CD8-positive, alpha-beta T cell (primary cell): ENCODE measurements at regions of chr6 and their contacts with region 1.

Region 1: DNA sequence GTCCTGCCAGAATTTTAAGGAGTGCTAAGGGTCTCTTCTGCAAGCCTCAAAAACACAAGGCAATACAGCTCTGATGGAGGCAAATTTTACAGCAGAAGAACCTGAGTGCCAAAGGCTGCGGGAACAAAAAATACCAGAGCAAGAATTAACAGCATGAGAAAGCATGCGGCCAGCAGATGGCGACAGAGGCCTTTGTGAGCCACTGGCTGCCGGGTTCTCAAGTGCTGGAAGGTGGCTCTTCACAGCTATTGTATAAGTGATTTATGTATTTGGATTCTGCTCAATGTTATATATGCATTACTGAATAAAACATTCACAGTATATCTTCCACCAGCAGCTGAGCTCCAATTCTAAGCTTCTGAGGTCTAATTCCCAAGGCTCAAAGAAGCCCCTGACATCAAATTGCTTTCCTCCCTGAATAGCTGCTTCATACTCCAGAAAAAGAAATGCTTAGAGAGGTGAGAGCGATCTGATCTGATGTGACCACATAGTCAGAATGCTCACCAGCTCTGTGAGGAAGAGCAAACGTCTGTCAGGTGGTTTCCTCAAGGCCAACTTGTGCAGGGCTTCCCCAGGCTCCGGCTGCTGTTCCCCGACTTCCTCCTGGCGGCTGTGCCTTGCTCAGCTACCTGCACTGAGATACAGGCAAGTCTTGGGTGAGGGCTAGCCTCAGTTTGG is 58.6 kb downstream of the PPP1R3G start:
- DNase-seq: peak; percentile 72 to 90 (median 84)
- ATAC-seq: peak; percentile 73
- H3K4me3 ChIP-seq: no peak overlapping the region
- H3K4me3 Mint-ChIP-seq: no peak overlapping the region
- H3K27ac ChIP-seq: no peak overlapping the region
- H3K27ac Mint-ChIP-seq: no peak overlapping the region
- H3K4me1 ChIP-seq: no peaks in the 10 kb centered on the region
- H3K4me1 Mint-ChIP-seq: peaks cover 2% of the 10 kb centered on the region
- H3K27me3 ChIP-seq: no peaks in the 10 kb centered on the region
- H3K27me3 Mint-ChIP-seq: no peaks in the 10 kb centered on the region
- CTCF ChIP-seq: peak; percentile 98

Region 2: DNA sequence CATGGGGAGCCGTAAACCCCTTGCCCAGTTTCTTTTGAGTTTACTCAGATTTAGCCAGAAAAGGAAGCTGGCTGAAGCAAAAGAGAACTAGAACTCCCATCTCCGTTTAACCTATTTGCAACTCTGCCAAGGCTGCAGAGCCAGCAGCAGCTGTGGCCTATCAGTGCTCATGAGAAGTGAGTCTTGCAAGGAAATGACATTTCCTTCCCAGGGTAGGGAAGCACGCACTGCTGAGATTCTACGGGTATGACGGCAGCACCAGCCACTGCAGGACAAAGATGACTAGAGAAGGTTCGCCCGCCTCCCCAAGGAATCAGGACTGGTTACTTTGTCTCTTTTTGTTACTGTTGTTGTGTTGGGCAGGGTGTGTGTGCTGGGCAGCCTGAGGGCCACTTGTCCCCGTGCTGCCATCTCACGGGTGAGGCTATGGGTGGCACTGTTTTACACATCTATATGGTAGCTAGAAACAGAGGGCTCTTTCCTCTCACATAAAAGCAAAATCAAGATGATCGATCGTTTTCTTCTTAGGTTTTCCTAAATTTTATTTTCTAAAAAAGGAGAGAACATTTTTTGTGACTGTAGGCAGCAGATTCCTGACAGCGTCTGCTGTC is 10.9 kb before region 1 on chr6:
- CTCF ChIA-PET with region 1: interaction called, 18 read pairs
- POLR2A ChIA-PET with region 1: no interaction called
- intact Hi-C with region 1: no loop called
- DNase-seq: peak in 2 of 9 experiments; percentile 11 to 37
- ATAC-seq: no peak
- H3K4me3 ChIP-seq: no peak overlapping the region
- H3K4me3 Mint-ChIP-seq: no peak overlapping the region
- H3K27ac ChIP-seq: no peak overlapping the region
- H3K27ac Mint-ChIP-seq: no peak overlapping the region
- H3K4me1 ChIP-seq: no peaks in the 10 kb centered on the region
- H3K4me1 Mint-ChIP-seq: no peaks in the 10 kb centered on the region
- H3K27me3 ChIP-seq: no peaks in the 10 kb centered on the region
- H3K27me3 Mint-ChIP-seq: no peaks in the 10 kb centered on the region
- CTCF ChIP-seq: no peak

Region 3: GRCh38 chr6:5174244-5174643 is 30.5 kb after region 1 on chr6:
- CTCF ChIA-PET with region 1: interaction called, 64 read pairs
- POLR2A ChIA-PET with region 1: interaction called, 7 read pairs
- intact Hi-C with region 1: loop called in 1 of 2 experiments (anchors 5 kb)
- DNase-seq: peak; percentile 13 to 85 (median 56)
- ATAC-seq: peak; percentile 87
- H3K4me3 ChIP-seq: peak overlapping the region; percentile 30 to 48
- H3K4me3 Mint-ChIP-seq: peak overlapping the region; percentile 68
- H3K27ac ChIP-seq: peak overlapping the region; percentile 66 to 91
- H3K27ac Mint-ChIP-seq: peak overlapping the region; percentile 89
- H3K4me1 ChIP-seq: peaks cover 45% of the 10 kb centered on the region
- H3K4me1 Mint-ChIP-seq: peaks cover 56% of the 10 kb centered on the region
- H3K27me3 ChIP-seq: no peaks in the 10 kb centered on the region
- H3K27me3 Mint-ChIP-seq: no peaks in the 10 kb centered on the region
- CTCF ChIP-seq: no peak

Region 4: DNA sequence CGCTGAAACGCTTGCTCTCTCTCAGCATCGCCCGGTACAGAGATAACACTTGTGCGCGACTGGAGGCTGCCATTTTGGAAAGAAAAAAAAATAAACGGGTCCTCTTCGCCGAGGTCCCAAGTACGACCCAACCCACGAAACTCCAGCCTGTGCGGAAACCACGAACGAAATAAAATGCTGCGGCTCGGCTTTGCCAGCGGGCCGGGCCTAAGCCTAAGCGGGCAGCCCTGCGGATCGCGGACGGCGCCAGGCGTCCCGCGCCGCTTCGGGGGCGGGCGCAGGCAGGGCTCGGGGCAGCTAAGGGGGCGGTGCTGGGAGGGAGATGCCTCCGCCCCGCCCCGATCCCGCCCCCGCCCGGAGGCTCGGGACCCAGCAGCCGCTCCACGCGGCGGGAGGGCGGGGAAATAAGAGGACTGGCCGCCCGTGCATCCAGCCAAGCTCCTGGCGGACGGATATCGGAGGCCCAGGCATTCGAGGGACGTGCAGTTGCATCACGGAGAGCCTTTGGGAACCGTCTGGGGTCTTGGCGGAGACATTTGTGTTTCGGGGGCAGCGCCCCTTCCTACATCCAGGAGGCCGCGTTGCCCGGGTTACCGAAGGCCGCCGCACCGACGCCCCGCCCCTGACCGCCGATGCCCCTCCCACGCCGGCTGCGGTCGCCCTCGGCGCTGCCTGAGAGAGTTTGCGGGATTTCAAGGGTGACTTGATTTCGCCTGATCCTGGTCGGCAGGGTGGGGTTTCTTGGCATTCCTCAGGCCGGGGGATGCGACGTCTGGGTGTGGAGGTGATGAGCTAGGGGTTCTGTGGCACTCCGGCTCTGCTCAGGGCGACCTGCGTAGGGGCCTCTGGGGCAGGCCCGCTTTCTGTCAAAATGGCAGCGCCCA is 117.1 kb after region 1 on chr6 and contains the starts of genes FARS2 and LYRM4:
- CTCF ChIA-PET with region 1: interaction called, 9 read pairs
- POLR2A ChIA-PET with region 1: interaction called, 6 read pairs
- intact Hi-C with region 1: loop called (anchors 2 to 5 kb)
- DNase-seq: peak; percentile 86 to 98 (median 92)
- ATAC-seq: peak; percentile 82
- H3K4me3 ChIP-seq: peak within 1 kb of the TSS; percentile 93
- H3K4me3 Mint-ChIP-seq: peak within 1 kb of the TSS; percentile 98
- H3K27ac ChIP-seq: peak within 1 kb of the TSS; percentile 97 to 99
- H3K27ac Mint-ChIP-seq: peak within 1 kb of the TSS; percentile 100
- H3K4me1 ChIP-seq: peaks cover 17% of the 10 kb centered on the region
- H3K4me1 Mint-ChIP-seq: peaks cover 37% of the 10 kb centered on the region
- H3K27me3 ChIP-seq: no peaks in the 10 kb centered on the region
- H3K27me3 Mint-ChIP-seq: no peaks in the 10 kb centered on the region
- CTCF ChIP-seq: no peak
- total RNA-seq, gene FARS2: 9.1 to 10.5 TPM
- total RNA-seq, gene LYRM4: 23.4 to 24.3 TPM

Region 5: DNA sequence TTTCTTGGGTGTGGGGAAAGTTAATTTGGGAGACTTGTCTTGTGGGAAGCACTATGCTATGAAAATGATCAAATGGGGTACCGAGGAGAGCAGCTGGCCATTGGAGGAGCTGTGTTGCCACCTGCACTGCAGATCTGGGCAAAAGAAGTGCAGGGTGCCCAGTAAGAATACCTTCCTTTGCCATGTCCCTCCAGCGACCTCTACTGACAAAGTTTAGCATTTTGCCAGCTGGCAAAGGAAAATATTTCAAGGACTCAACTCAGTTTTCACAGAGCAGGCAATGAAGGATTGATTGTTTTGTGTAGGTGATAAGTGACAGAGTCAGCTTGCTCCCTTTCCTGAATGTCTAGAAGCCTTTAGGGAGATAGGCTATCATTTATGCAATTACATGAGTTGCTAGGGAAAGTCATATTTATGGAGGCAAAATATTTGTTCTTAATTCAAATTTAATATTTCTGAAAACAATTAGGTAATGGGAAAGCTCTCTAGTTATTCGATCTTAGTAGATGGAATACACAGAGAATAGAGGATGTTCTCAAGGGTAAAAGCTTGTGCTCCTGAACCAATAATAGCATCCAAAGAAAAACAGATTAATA is 236.0 kb after region 1 on chr6:
- CTCF ChIA-PET with region 1: interaction called, 13 read pairs
- POLR2A ChIA-PET with region 1: no interaction called
- intact Hi-C with region 1: no loop called
- DNase-seq: peak in 1 of 9 experiments; percentile 17
- ATAC-seq: no peak
- H3K4me3 ChIP-seq: no peak overlapping the region
- H3K4me3 Mint-ChIP-seq: no peak overlapping the region
- H3K27ac ChIP-seq: no peak overlapping the region
- H3K27ac Mint-ChIP-seq: no peak overlapping the region
- H3K4me1 ChIP-seq: no peaks in the 10 kb centered on the region
- H3K4me1 Mint-ChIP-seq: peaks cover 6% of the 10 kb centered on the region
- H3K27me3 ChIP-seq: no peaks in the 10 kb centered on the region
- H3K27me3 Mint-ChIP-seq: no peaks in the 10 kb centered on the region
- CTCF ChIP-seq: no peak

Region 6: GRCh38 chr6:6315660-6316059 is 1171.9 kb after region 1 on chr6:
- CTCF ChIA-PET with region 1: no interaction called
- POLR2A ChIA-PET with region 1: no interaction called
- intact Hi-C with region 1: loop called in 1 of 2 experiments (anchors 10 kb)
- DNase-seq: peak in 4 of 9 experiments; percentile 14 to 52 (median 28)
- ATAC-seq: no peak
- H3K4me3 ChIP-seq: no peak overlapping the region
- H3K4me3 Mint-ChIP-seq: no peak overlapping the region
- H3K27ac ChIP-seq: no peak overlapping the region
- H3K27ac Mint-ChIP-seq: no peak overlapping the region
- H3K4me1 ChIP-seq: no peaks in the 10 kb centered on the region
- H3K4me1 Mint-ChIP-seq: peaks cover 5% of the 10 kb centered on the region
- H3K27me3 ChIP-seq: peaks cover 7% of the 10 kb centered on the region in 2 experiments
- H3K27me3 Mint-ChIP-seq: peaks cover 42% of the 10 kb centered on the region
- CTCF ChIP-seq: peak; percentile 80

Region 7: DNA sequence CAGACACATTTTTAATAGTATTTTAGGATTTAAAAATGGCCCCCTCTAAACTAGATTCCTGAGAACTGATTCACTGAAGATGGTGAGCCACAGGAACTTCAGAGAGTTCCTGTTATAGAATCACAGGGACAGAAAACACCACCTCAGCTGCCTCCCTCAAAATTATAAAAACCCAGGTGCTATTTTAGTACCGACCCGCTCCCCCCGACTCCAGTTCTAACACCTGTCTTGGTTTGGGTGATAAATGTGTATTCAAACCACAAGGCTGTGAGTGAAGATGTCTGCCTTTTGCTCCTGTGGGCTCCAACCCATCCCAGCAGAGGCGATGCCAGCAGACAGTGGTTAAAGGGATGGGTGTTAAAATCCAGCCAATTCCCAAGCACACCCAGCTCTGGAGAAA is 1317.4 kb after region 1 on chr6:
- CTCF ChIA-PET with region 1: no interaction called
- POLR2A ChIA-PET with region 1: no interaction called
- intact Hi-C with region 1: no loop called
- DNase-seq: no peak
- ATAC-seq: no peak
- H3K4me3 ChIP-seq: no peak overlapping the region
- H3K4me3 Mint-ChIP-seq: no peak overlapping the region
- H3K27ac ChIP-seq: no peak overlapping the region
- H3K27ac Mint-ChIP-seq: no peak overlapping the region
- H3K4me1 ChIP-seq: no peaks in the 10 kb centered on the region
- H3K4me1 Mint-ChIP-seq: no peaks in the 10 kb centered on the region
- H3K27me3 ChIP-seq: no peaks in the 10 kb centered on the region
- H3K27me3 Mint-ChIP-seq: peaks cover 16% of the 10 kb centered on the region
- CTCF ChIP-seq: no peak